ENCODE measurements at regions of chr6 and their contacts with region 1.

Region 1: DNA sequence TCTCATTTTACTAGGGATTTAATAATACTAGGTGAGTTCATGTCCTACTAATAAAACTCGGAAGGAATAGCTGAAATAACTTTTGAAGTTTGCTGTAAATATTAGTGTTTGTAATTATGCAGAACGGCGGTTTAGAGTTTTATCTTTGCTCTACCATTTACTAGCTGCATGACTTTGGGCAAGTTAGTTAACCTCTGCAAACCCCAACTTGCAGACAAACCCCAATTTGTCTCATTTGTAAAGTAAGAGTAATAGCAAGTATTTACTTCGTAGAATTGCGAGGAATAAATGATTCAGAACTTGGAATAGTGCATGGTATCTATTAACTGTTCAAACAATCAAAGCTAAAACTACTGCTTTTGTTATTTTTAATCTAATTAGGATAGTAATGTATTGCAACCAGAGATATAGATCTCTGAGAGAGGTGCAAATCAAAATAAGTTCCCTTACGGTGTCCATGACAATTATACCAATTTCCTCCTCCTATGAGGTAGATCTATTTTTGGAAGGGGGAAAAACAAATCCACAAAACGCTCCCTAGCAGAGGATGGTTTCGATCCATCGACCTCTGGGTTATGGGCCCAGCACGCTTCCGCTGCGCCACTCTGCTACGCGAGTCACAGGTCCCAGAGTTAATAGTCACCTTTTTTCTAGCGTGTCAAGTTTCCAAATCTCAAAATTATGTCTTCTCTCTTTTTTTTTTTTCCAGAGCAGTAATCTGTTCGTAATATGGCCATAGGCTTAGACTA is 35.1 kb upstream of the BTN3A2 start:
- DNase-seq: no peak
- ATAC-seq: peak; percentile 29

Region 2: DNA sequence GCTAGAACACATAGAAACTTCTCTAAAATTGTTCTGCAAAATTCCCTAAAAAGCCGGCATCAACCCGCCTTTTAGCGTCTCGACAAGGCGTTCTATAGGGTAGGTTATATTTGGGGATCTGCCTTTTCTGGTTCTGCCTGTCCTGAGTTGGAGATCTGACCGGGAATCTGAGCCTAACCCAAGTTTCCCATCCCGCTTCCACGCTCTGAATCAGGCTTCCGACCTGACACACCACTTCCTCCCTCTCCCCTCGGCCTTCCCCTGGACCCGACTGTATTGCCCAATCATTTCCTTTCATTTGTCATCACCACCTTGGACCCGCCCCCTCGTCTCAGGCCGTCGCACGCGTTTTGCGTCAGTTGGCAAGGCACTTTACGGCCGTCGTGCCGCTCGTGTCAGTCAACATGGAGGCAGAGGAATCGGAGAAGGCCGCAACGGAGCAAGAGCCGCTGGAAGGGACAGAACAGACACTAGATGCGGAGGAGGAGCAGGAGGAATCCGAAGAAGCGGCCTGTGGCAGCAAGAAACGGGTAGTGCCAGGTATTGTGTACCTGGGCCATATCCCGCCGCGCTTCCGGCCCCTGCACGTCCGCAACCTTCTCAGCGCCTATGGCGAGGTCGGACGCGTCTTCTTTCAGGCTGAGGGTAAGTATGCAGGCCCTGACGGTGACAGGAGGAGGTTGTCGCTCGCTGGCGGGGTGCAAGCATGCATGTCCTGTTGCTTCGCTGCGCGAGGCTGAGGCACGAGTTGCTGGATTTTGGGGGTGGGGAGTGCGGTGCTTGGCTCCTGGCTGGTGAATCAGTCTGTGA is 266.8 kb after region 1 on chr6 and contains the start of gene ABT1:
- intact Hi-C with region 1: loop called (anchors 10 kb)
- DNase-seq: peak; percentile 98
- ATAC-seq: peak; percentile 99
- total RNA-seq, gene ABT1: 9.0 TPM

Measured in left ventricle myocardium superior (tissue), 1 donor.